Activated naive CD8-positive, alpha-beta T cell treated with anti-CD3 and anti-CD28 coated beads, Interleukin-2, amount 10 ng/mL, durations not matched to agents 7 days and 5 days (primary cell): ENCODE measurements at regions of chr21 and their contacts with region 1.

Region 1: DNA sequence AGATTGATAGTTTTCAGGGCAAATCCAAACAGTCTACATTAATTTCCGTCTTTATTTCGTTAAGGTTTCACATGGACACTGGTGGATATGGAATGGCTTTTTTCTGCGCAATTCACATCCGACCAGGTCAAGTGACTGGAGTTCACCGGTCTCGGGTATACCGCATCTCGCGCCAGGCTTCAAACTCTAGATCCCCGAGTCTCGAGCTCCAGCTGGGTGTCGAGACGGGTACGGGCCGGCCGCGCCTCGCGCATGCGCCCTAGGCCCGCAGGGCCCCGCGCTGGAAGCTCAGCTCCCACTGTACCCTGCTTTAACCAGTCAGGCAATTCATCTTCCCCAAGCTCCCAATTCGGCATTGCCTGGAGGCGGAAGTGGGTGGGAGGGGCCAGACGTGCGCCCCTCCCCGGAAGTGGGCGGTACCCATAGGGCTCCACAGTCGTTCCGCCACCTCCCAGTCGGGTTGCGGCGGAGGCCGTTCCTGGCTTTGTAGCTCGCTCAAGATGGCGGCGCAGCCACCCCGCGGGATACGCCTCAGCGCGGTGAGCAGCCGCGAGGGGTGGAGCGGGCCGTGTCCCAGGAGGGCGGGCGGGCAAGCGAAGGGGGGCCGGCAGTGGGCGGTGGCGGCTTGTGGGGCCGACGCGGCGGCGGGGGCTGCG is at the start of gene MORC3:
- DNase-seq: peak; percentile 98
- ATAC-seq: peak; percentile 92
- H3K4me3 Mint-ChIP-seq: peak within 1 kb of the TSS; percentile 96
- H3K27ac Mint-ChIP-seq: peak within 1 kb of the TSS; percentile 98
- H3K4me1 Mint-ChIP-seq: peaks cover 28% of the 10 kb centered on the region
- H3K27me3 Mint-ChIP-seq: no peaks in the 10 kb centered on the region
- total RNA-seq, gene MORC3: 46.7 to 53.7 TPM

Region 2: GRCh38 chr21:36149788-36150711 is 169.8 kb before region 1 on chr21:
- POLR2A ChIA-PET with region 1: interaction called, 12 read pairs
- DNase-seq: no peak
- ATAC-seq: peak; percentile 50
- H3K4me3 Mint-ChIP-seq: peak overlapping the region; percentile 71
- H3K27ac Mint-ChIP-seq: peak overlapping the region; percentile 89
- H3K4me1 Mint-ChIP-seq: peaks cover 41% of the 10 kb centered on the region
- H3K27me3 Mint-ChIP-seq: no peaks in the 10 kb centered on the region

Region 3: GRCh38 chr21:36171741-36172331 is 148.1 kb before region 1 on chr21:
- POLR2A ChIA-PET with region 1: interaction called, 14 read pairs
- DNase-seq: no peak
- ATAC-seq: no peak
- H3K4me3 Mint-ChIP-seq: no peak overlapping the region
- H3K27ac Mint-ChIP-seq: peak overlapping the region; percentile 75
- H3K4me1 Mint-ChIP-seq: peaks cover 22% of the 10 kb centered on the region
- H3K27me3 Mint-ChIP-seq: no peaks in the 10 kb centered on the region

Region 4: GRCh38 chr21:36260030-36260787 is 59.7 kb before region 1 on chr21:
- POLR2A ChIA-PET with region 1: interaction called, 10 read pairs
- DNase-seq: no peak
- ATAC-seq: peak; percentile 77
- H3K4me3 Mint-ChIP-seq: peak overlapping the region; percentile 81
- H3K27ac Mint-ChIP-seq: peak overlapping the region; percentile 90
- H3K4me1 Mint-ChIP-seq: peaks cover 11% of the 10 kb centered on the region
- H3K27me3 Mint-ChIP-seq: no peaks in the 10 kb centered on the region

Region 5: DNA sequence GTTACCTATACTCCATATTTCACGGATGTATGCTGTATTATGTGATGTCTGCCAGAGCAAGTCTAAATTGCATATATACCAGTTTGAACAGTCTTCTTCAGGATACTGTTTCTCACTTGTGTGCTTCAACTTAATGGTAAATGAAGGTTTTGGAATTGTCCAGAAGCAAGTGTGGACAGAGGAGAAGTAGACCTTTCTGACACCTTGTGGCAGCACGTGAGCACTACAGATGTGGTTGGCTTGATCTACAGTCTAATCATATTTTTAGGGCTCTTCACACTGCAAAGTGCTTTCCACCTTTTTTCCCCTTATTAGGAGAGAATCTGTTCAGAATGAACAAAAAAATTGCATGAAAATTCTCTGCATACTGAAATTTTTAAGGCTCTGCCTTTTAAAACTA is 11.0 kb after region 1 on chr21:
- POLR2A ChIA-PET with region 1: interaction called, 15 read pairs
- DNase-seq: no peak
- ATAC-seq: peak; percentile 82
- H3K4me3 Mint-ChIP-seq: no peak overlapping the region
- H3K27ac Mint-ChIP-seq: peak overlapping the region; percentile 48
- H3K4me1 Mint-ChIP-seq: peaks cover 18% of the 10 kb centered on the region
- H3K27me3 Mint-ChIP-seq: no peaks in the 10 kb centered on the region

Region 6: DNA sequence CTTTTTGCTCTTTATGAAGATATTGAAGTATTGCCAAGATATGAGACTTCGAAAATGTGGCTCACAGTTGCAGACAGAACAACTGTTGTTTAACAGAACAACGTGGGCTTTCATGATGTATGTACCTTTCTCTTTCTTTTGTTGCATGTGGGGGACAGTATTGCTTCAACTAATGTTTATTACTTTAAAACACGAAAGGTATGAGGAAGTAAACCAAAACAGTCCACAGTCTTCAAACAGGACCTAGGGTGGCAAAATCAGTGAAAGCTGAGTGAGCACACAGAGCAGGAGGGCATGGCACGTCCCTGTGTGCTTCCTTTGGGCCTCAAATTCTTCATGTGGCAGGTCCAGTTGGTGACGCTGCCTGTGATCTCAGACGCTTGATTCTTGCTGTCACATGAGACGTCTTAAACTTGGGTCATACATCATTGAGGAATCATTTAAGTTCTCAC is 57.5 kb after region 1 on chr21:
- POLR2A ChIA-PET with region 1: no interaction called
- DNase-seq: no peak
- ATAC-seq: no peak
- H3K4me3 Mint-ChIP-seq: no peak overlapping the region
- H3K27ac Mint-ChIP-seq: no peak overlapping the region
- H3K4me1 Mint-ChIP-seq: peaks cover 2% of the 10 kb centered on the region
- H3K27me3 Mint-ChIP-seq: no peaks in the 10 kb centered on the region